Prostate gland (tissue), 2 donors: ENCODE measurements at regions of chr1 and their contacts with region 1.

Region 1: DNA sequence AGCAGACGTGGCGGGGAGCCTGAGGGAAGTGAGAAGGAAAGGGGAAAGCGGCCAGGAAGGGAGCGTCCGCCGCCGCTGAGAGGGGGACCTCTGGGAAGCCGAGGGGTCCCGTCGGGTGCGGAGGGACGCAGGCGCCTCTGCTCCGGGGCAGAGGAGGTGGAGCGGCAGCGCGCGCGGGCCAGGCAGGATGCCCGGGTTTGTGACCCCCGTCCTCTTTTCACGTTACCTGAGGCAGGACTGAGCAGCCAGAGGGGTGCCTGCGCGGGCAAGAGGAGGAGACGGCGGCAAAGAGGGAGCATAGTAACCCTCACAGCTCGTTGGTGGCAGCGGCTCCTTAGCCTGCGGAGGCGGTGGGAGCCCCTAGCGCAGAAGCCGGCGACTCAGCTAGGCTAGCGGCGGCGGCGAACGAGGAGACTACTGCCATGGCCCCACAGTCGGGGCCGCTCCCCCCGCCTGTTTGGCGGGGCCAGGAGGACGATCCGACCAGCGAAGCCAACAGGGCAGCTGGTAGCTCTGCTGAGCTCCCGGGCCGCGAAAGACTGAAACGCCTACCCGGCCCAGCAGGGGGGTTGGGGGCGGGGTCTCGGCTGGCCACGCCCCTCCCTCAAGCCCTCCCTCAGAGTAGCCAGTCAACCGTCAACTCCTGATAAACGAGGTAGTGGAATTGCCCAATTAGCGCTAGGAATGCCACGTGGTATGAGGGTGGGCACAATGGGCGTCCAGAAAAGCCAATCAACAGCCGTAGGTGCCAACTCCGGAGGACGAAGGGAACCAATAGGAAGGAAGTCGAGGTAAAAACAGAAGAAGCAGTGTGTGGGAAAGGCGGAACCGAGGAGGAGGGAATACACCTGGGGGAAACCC is at the start of gene TESK2:
- DNase-seq: peak; percentile 100
- H3K4me3 ChIP-seq: peak within 1 kb of the TSS; percentile 86 to 99
- H3K27ac ChIP-seq: peak within 1 kb of the TSS; percentile 90 to 93
- H3K4me1 ChIP-seq: no peaks in the 10 kb centered on the region
- H3K27me3 ChIP-seq: no peaks in the 10 kb centered on the region
- CTCF ChIP-seq: peak in 3 of 4 experiments; percentile 32 to 87 (median 54)
- POLR2A ChIP-seq: peak; percentile 99
- total RNA-seq, gene TESK2: 21.4 to 26.4 TPM

Region 2: DNA sequence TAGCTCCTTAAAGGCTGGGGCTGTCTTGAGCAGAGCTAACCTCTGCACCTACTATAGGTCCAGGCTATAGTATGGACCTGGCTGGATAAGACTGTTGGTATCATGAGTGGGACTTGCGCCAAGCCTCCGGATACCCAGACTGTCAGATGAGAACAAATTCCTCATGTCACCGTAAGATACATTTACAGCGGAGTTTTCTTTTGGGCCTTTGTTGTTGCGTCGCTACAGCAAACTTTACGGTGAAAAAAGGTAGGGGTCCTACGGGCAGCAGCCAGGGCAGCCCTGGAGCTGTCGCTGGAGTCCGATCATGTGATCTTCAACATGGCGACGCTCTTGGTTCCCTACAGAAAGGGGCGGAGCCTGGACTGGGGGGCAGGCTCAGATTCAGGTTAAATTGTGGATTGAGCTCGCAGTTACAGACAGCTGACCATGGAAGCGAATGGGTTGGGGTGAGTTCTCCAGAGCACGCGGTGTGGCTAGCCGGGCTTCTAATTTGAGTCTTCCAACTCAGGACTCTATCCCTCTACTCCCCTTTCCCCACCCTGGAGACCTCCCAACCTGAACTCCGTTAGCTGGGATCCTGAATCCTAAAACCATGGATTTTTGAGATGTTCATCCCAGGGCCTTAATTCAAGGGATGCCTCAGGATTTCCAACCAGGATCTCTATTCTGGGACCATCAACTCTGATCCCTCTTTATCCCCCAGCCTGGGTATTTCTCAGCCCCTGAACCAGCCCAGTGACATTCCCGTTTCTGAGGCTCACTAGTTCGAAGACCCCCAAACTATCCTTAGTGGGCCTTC is 478.8 kb before region 1 on chr1 and contains the start of gene UROD:
- intact Hi-C with region 1: loop called (anchors 5 kb)
- DNase-seq: peak; percentile 92
- H3K4me3 ChIP-seq: peak within 1 kb of the TSS; percentile 74 to 89
- H3K27ac ChIP-seq: peak within 1 kb of the TSS; percentile 71 to 75
- H3K4me1 ChIP-seq: peaks cover 16% of the 10 kb centered on the region
- H3K27me3 ChIP-seq: no peaks in the 10 kb centered on the region
- CTCF ChIP-seq: peak in 2 of 4 experiments; percentile 6 to 11
- POLR2A ChIP-seq: peak; percentile 33
- total RNA-seq, gene UROD: 57.7 to 152 TPM

Region 3: DNA sequence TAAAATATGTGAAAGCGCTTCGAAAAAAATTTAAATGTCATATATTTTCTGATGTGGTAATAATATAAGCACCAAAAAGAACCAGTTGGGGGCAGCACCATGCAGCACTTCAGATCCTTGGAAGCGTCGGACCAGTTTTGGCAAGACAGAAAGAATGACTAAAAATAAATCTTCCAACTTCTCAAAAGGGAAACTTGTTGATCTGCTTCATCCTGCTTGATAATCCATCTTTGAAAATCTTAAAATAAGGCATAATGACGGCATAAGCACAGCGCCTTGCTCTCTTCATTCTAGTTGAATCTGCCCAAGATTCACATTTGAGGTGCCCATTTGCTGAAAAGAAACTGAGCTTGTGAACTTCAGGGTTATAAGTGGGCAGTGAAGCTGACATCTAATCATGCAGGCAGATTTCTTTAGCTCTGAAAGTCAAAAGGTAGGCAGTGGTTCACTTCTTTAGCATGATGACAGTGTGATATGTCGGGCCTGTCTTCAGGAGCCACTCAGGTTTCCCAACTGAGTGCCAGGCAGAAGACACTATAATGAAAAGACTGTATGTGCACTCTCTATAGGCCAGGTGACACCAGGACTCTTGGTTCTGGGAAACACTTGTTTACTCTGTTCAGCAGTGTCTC is 130.9 kb before region 1 on chr1:
- intact Hi-C with region 1: loop called (anchors 1 kb)
- DNase-seq: peak; percentile 75
- H3K4me3 ChIP-seq: no peak overlapping the region
- H3K27ac ChIP-seq: peak overlapping the region; percentile 80 to 81
- H3K4me1 ChIP-seq: peaks cover 8% of the 10 kb centered on the region
- H3K27me3 ChIP-seq: no peaks in the 10 kb centered on the region
- CTCF ChIP-seq: peak; percentile 58 to 88 (median 78)
- POLR2A ChIP-seq: no peak

Region 4: DNA sequence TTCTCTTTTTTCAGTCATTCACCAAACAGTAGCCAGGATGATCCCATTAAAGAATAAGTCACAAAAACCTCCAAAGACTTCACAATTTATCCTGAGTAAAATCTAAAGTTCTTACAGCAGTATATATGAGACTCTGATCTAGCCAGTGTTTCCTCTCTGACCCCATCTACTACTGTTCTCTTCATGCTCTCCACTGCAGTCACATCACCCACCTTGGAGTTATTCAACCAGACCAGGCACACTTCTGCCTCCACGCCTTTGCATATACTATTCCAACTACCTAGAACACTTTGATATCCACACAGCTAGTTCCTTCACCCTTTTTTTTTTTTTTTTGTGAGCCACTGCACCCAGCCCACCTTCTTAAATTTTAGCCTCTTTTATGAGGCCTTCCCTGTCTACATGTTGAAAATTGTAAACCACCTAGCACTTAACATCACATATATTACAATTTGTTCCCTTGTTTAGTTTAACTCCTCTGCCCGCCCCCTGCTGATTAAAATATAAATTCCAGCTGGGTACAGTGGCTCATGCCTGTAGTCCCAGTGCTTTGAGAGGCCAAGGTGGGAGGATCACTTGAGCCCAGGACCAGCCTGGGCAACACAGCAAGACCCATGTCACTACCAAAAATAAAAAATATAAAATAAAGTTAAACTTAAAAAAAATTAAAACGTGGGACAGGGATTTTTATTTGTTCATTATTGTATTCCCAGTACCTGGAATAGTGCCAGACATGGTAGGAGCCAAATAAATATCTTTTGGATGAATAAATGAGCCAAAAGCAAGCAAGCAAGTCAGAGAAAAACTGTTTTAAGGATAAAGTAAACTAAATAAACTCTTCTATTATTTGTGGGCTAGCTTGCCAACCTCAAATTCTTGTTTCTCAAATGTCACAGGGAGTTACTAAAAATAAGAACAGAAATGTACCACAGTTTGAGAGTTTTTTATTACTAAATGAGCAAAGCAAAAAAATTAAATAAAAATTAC is 115.5 kb before region 1 on chr1:
- intact Hi-C with region 1: loop called (anchors 5 kb)
- DNase-seq: no peak
- H3K4me3 ChIP-seq: no peak overlapping the region
- H3K27ac ChIP-seq: no peak overlapping the region
- H3K4me1 ChIP-seq: no peaks in the 10 kb centered on the region
- H3K27me3 ChIP-seq: no peaks in the 10 kb centered on the region
- CTCF ChIP-seq: peak in 1 of 4 experiments; percentile 2
- POLR2A ChIP-seq: no peak